WTC11 (cell line): ENCODE measurements at regions of chr22 and their contacts with region 1.

Region 1: GRCh38 chr22:30763815-30764686 is 69.4 kb downstream of the OSBP2 start:
- DNase-seq: peak; percentile 62
- ATAC-seq: peak; percentile 93
- H3K4me3 Mint-ChIP-seq: 0 out of 2 replicates have a peak overlapping the region, but pooled peaks have one; percentile 20
- H3K27ac Mint-ChIP-seq: no peak overlapping the region
- H3K4me1 Mint-ChIP-seq: peaks cover 2% of the 10 kb centered on the region; the same call in 1 of the 2 replicates
- H3K27me3 Mint-ChIP-seq: no peaks in the 10 kb centered on the region
- CTCF ChIP-seq: peak; percentile 56; the same call in 1 of the 2 replicates

Region 2: GRCh38 chr22:30694171-30694639 is 69.8 kb before region 1 on chr22:
- CTCF ChIA-PET with region 1: no interaction called
- POLR2A ChIA-PET with region 1: no interaction called
- DNase-seq: peak; percentile 66
- ATAC-seq: peak; percentile 70
- H3K4me3 Mint-ChIP-seq: peak overlapping the region; percentile 79
- H3K27ac Mint-ChIP-seq: 0 out of 2 replicates have a peak overlapping the region, but pooled peaks have one; percentile 62
- H3K4me1 Mint-ChIP-seq: peaks cover 16% of the 10 kb centered on the region
- H3K27me3 Mint-ChIP-seq: peaks cover 27% of the 10 kb centered on the region
- CTCF ChIP-seq: no peak

Region 3: GRCh38 chr22:30802202-30803166 is 38.4 kb after region 1 on chr22:
- CTCF ChIA-PET with region 1: interaction called, 11 read pairs
- POLR2A ChIA-PET with region 1: no interaction called
- DNase-seq: peak; percentile 92
- ATAC-seq: peak; percentile 93
- H3K4me3 Mint-ChIP-seq: peak overlapping the region; percentile 62
- H3K27ac Mint-ChIP-seq: no peak overlapping the region
- H3K4me1 Mint-ChIP-seq: peaks cover 25% of the 10 kb centered on the region
- H3K27me3 Mint-ChIP-seq: peaks cover 54% of the 10 kb centered on the region
- CTCF ChIP-seq: no peak

Region 4: GRCh38 chr22:30890686-30891442 is 126.8 kb after region 1 on chr22:
- CTCF ChIA-PET with region 1: interaction called, 24 read pairs
- POLR2A ChIA-PET with region 1: interaction called, 3 read pairs
- DNase-seq: peak; percentile 76
- ATAC-seq: peak; percentile 87
- H3K4me3 Mint-ChIP-seq: no peak overlapping the region
- H3K27ac Mint-ChIP-seq: no peak overlapping the region
- H3K4me1 Mint-ChIP-seq: peaks cover 29% of the 10 kb centered on the region
- H3K27me3 Mint-ChIP-seq: no peaks in the 10 kb centered on the region; the same call in none of the 2 replicates
- CTCF ChIP-seq: peak; percentile 78

Region 5: GRCh38 chr22:30920407-30920806 is 156.4 kb after region 1 on chr22:
- CTCF ChIA-PET with region 1: interaction called, 15 read pairs
- POLR2A ChIA-PET with region 1: interaction called, 3 read pairs
- DNase-seq: peak; percentile 88
- ATAC-seq: peak; percentile 83
- H3K4me3 Mint-ChIP-seq: no peak overlapping the region
- H3K27ac Mint-ChIP-seq: no peak overlapping the region
- H3K4me1 Mint-ChIP-seq: peaks cover 4% of the 10 kb centered on the region; the same call in 1 of the 2 replicates
- H3K27me3 Mint-ChIP-seq: peaks cover 2% of the 10 kb centered on the region; the same call in 1 of the 2 replicates
- CTCF ChIP-seq: peak; percentile 87